Spleen (tissue), 13 donors: ENCODE measurements at regions of chr6 and their contacts with region 1.

Region 1: GRCh38 chr6:89432875-89433251 is at the start of gene ANKRD6:
- DNase-seq: peak; percentile 96
- H3K4me3 ChIP-seq: peak within 1 kb of the TSS; percentile 63 to 92 (median 72)
- H3K27ac ChIP-seq: peak within 1 kb of the TSS in 3 of 8 donors; percentile 41 to 59 (median 43)
- H3K4me1 ChIP-seq: peaks cover 0 to 34% (median 19%) of the 10 kb centered on the region in 6 donors
- H3K27me3 ChIP-seq: no peaks in the 10 kb centered on the region
- CTCF ChIP-seq: peak; percentile 63 to 96 (median 91)
- POLR2A ChIP-seq: no peak
- total RNA-seq, gene ANKRD6: 6.0 to 18.4 (median 10.1) TPM

Region 2: GRCh38 chr6:89599727-89600126 is 166.9 kb after region 1 on chr6:
- intact Hi-C with region 1: loop called (anchors 10 kb)
- DNase-seq: no peak
- H3K4me3 ChIP-seq: no peak overlapping the region
- H3K27ac ChIP-seq: no peak overlapping the region
- H3K4me1 ChIP-seq: peaks cover 0 to 18% (median 10%) of the 10 kb centered on the region in 6 donors
- H3K27me3 ChIP-seq: no peaks in the 10 kb centered on the region
- CTCF ChIP-seq: no peak
- POLR2A ChIP-seq: no peak